Heart right ventricle (tissue), 16 donors: ENCODE measurements at regions of chr4 and their contacts with region 1.

Region 1: GRCh38 chr4:122758033-122758432 is 25.5 kb downstream of the BBS12 start:
- DNase-seq: no peak
- ATAC-seq: peak in 3 of 8 donors; percentile 31 to 63 (median 46)
- H3K4me3 ChIP-seq: no peak overlapping the region
- H3K27ac ChIP-seq: peak overlapping the region in 3 of 10 donors; percentile 11 to 19 (median 13)
- H3K4me1 ChIP-seq: peaks cover 0 to 18% (median 8%) of the 10 kb centered on the region in 9 donors
- H3K27me3 ChIP-seq: peaks cover 0 to 3% (median 0%) of the 10 kb centered on the region in 7 donors
- CTCF ChIP-seq: peak; percentile 61 to 87 (median 80)

Region 2: GRCh38 chr4:122914292-122914904 is 156.4 kb after region 1 on chr4:
- intact Hi-C with region 1: loop called in 6 of 10 experiments (anchors 2 to 5 kb)
- DNase-seq: no peak
- ATAC-seq: peak in 6 of 8 donors; percentile 55 to 73 (median 56)
- H3K4me3 ChIP-seq: no peak overlapping the region
- H3K27ac ChIP-seq: no peak overlapping the region
- H3K4me1 ChIP-seq: no peaks in the 10 kb centered on the region
- H3K27me3 ChIP-seq: no peaks in the 10 kb centered on the region
- CTCF ChIP-seq: peak in 7 of 9 donors; percentile 12 to 57 (median 52)

Region 3: GRCh38 chr4:122922877-122923511 is 165.0 kb after region 1 on chr4:
- intact Hi-C with region 1: loop called in 7 of 10 experiments (anchors 2 to 5 kb)
- DNase-seq: peak; percentile 82 to 86
- ATAC-seq: peak; percentile 96 to 99 (median 98)
- H3K4me3 ChIP-seq: peak overlapping the region; percentile 64 to 95 (median 92)
- H3K27ac ChIP-seq: peak overlapping the region in 9 of 10 donors; percentile 69 to 90 (median 82)
- H3K4me1 ChIP-seq: peaks cover 0 to 25% (median 17%) of the 10 kb centered on the region in 9 donors
- H3K27me3 ChIP-seq: no peaks in the 10 kb centered on the region
- CTCF ChIP-seq: peak in 1 of 9 donors; percentile 12

Region 4: DNA sequence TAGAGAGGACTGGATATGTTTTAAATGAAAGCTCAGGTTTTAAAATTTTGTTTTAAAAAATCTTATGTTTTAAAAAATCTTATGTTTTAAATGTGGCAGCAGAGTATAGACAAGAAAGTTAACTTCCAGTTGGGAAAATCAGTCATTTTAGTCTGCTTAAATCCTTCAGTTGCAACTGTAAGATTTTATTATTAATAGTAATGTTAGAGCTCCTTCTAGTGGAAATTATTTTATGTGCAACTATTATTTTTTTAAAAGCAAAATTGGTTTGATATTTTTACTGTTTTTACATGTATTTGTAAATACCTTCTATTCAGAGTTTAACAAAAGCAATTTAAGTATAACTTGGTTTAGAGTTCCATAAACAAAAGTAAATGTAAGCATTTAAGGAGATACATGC is 172.8 kb after region 1 on chr4:
- intact Hi-C with region 1: loop called in 3 of 10 experiments (anchors 1 to 5 kb)
- DNase-seq: no peak
- ATAC-seq: no peak
- H3K4me3 ChIP-seq: no peak overlapping the region
- H3K27ac ChIP-seq: no peak overlapping the region
- H3K4me1 ChIP-seq: no peaks in the 10 kb centered on the region
- H3K27me3 ChIP-seq: no peaks in the 10 kb centered on the region
- CTCF ChIP-seq: peak; percentile 28 to 77 (median 65)

Region 5: GRCh38 chr4:122946142-122946541 is 188.1 kb after region 1 on chr4:
- intact Hi-C with region 1: no loop called
- DNase-seq: no peak
- ATAC-seq: no peak
- H3K4me3 ChIP-seq: no peak overlapping the region
- H3K27ac ChIP-seq: no peak overlapping the region
- H3K4me1 ChIP-seq: no peaks in the 10 kb centered on the region
- H3K27me3 ChIP-seq: no peaks in the 10 kb centered on the region
- CTCF ChIP-seq: no peak